RWPE1 (cell line): ENCODE measurements at regions of chr10 and their contacts with region 1.

Region 1: GRCh38 chr10:95430231-95430951 is 130.8 kb downstream of the SORBS1 start:
- DNase-seq: peak; percentile 76
- H3K27ac ChIP-seq: no peak overlapping the region
- CTCF ChIP-seq: peak; percentile 93

Region 2: GRCh38 chr10:95440756-95441546 is 10.6 kb after region 1 on chr10:
- CTCF ChIA-PET with region 1: interaction called, 21 read pairs
- POLR2A ChIA-PET with region 1: no interaction called
- DNase-seq: no peak
- H3K27ac ChIP-seq: no peak overlapping the region
- CTCF ChIP-seq: no peak